Activated CD8-positive, alpha-beta T cell treated with anti-CD3 and anti-CD28 coated beads for 36 hours (primary cell): ENCODE measurements at regions of chr4 and their contacts with region 1.

Region 1: DNA sequence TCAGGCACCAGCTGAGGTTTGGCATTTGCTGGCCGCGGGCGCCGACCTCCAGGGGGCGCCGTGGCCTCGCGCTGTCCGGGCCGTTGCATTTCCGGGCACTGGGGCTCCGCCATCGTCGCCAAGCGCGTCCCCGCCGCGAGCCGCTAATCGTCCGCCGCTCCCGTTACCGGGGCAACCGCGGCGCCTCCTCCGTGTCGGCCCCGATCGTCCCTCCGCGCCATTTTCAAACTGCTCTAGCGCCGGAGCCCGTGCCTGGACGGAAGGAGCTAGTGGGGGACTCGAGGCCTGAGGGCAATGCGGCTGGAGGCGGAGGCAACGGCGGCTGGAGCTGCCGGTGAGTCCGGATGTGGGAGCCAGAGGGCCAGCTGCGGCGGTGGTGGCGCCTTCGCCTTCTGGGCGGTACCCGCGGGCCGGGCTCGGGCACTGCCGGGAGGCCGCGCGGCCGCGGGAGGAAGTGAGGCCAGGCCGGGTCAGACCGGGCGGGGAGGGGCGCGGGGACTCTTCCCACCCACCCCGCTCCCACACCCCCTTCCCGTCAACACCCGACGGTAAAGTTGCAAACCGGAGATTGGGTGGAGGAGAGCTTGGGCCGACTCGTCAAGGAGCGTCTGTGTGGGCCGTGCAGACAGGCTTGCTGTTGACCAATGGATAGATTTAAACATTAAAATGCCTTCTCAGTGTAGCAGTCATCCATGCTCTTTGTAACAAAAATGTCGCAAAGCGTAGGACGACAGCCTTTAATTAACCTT is at the start of gene CEP135:
- DNase-seq: peak; percentile 93
- ATAC-seq: peak; percentile 83
- H3K4me3 Mint-ChIP-seq: peak within 1 kb of the TSS; percentile 83
- H3K27ac Mint-ChIP-seq: peak within 1 kb of the TSS; percentile 94
- H3K4me1 Mint-ChIP-seq: peaks cover 23% of the 10 kb centered on the region
- H3K27me3 Mint-ChIP-seq: no peaks in the 10 kb centered on the region
- CTCF ChIP-seq: no peak
- total RNA-seq, gene CEP135: 12.5 to 12.9 TPM

Region 2: DNA sequence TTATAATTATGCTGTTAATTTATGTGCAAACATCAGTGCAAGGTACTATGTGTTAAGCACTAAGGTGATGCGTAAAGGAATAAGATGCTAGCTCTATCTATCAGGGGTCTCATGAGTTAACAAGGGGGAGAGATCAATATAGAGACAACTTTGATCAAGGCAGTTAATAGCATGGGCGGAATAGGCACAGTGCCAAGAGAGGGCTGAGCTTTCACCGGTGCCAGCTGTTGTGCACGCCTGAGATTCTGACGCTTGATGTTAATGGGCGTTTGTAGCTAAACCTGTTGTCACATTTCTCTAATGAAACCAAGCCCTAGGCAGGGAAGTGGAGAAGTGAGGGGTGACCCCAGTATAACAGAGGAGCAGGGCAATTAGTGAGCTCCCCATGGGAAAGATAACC is 226.8 kb before region 1 on chr4:
- CTCF ChIA-PET with region 1: no interaction called
- POLR2A ChIA-PET with region 1: no interaction called
- intact Hi-C with region 1: no loop called
- DNase-seq: no peak
- ATAC-seq: no peak
- H3K4me3 Mint-ChIP-seq: no peak overlapping the region
- H3K27ac Mint-ChIP-seq: no peak overlapping the region
- H3K4me1 Mint-ChIP-seq: no peaks in the 10 kb centered on the region
- H3K27me3 Mint-ChIP-seq: peaks cover 2% of the 10 kb centered on the region
- CTCF ChIP-seq: no peak

Region 3: GRCh38 chr4:55834086-55834800 is 114.7 kb before region 1 on chr4:
- CTCF ChIA-PET with region 1: no interaction called
- POLR2A ChIA-PET with region 1: no interaction called
- intact Hi-C with region 1: no loop called
- DNase-seq: no peak
- ATAC-seq: no peak
- H3K4me3 Mint-ChIP-seq: no peak overlapping the region
- H3K27ac Mint-ChIP-seq: no peak overlapping the region
- H3K4me1 Mint-ChIP-seq: no peaks in the 10 kb centered on the region
- H3K27me3 Mint-ChIP-seq: peaks cover 24% of the 10 kb centered on the region
- CTCF ChIP-seq: no peak

Region 4: DNA sequence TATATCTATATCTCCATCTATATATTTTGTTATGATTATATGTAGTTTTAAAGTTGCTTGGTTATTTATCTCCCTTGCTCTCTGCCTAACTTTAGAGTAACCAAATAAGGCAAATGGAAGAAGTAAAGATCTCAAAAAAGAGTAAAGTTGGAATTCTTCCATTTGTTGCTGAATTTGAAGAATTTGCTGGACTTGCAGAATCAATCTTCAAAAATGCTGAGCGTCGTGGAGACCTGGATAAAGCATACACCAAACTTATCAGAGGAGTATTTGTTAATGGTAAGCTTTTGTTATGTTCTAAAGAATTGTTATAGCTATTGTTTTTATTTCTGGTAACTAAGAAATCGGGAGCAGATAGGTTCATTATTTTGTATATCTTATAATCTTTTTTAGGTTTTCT is 52.3 kb before region 1 on chr4:
- CTCF ChIA-PET with region 1: interaction called, 11 read pairs
- POLR2A ChIA-PET with region 1: no interaction called
- intact Hi-C with region 1: no loop called
- DNase-seq: no peak
- ATAC-seq: no peak
- H3K4me3 Mint-ChIP-seq: no peak overlapping the region
- H3K27ac Mint-ChIP-seq: no peak overlapping the region
- H3K4me1 Mint-ChIP-seq: peaks cover 7% of the 10 kb centered on the region
- H3K27me3 Mint-ChIP-seq: no peaks in the 10 kb centered on the region
- CTCF ChIP-seq: no peak

Region 5: DNA sequence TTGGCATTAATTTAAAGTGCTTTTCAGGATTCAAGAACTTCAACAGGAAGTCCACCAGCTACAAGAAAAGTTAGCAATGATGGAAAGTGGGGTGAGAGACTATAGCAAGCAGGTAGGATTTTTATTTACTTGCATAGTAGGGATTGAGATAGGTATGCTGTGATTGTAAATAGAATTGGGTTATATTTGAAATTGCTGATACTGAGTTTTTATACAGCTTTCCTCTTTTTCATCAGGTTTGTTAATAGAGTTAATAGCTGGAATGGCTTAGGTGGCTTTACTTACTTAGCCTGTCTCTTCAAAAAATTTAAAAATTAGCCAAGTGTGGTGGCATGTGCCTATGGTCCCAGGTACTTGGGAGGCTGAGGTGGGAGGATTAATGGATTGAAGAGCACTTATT is 10.8 kb after region 1 on chr4:
- CTCF ChIA-PET with region 1: interaction called, 28 read pairs
- POLR2A ChIA-PET with region 1: interaction called, 5 read pairs
- intact Hi-C with region 1: no loop called
- DNase-seq: no peak
- ATAC-seq: no peak
- H3K4me3 Mint-ChIP-seq: no peak overlapping the region
- H3K27ac Mint-ChIP-seq: no peak overlapping the region
- H3K4me1 Mint-ChIP-seq: no peaks in the 10 kb centered on the region
- H3K27me3 Mint-ChIP-seq: no peaks in the 10 kb centered on the region
- CTCF ChIP-seq: no peak

Region 6: GRCh38 chr4:55973650-55974049 is 24.8 kb after region 1 on chr4:
- CTCF ChIA-PET with region 1: interaction called, 11 read pairs
- POLR2A ChIA-PET with region 1: interaction called, 3 read pairs
- intact Hi-C with region 1: no loop called
- DNase-seq: no peak
- ATAC-seq: no peak
- H3K4me3 Mint-ChIP-seq: no peak overlapping the region
- H3K27ac Mint-ChIP-seq: no peak overlapping the region
- H3K4me1 Mint-ChIP-seq: no peaks in the 10 kb centered on the region
- H3K27me3 Mint-ChIP-seq: no peaks in the 10 kb centered on the region
- CTCF ChIP-seq: no peak

Region 7: GRCh38 chr4:56026596-56026995 is 77.7 kb after region 1 on chr4:
- CTCF ChIA-PET with region 1: no interaction called
- POLR2A ChIA-PET with region 1: no interaction called
- intact Hi-C with region 1: no loop called
- DNase-seq: no peak
- ATAC-seq: no peak
- H3K4me3 Mint-ChIP-seq: no peak overlapping the region
- H3K27ac Mint-ChIP-seq: no peak overlapping the region
- H3K4me1 Mint-ChIP-seq: no peaks in the 10 kb centered on the region
- H3K27me3 Mint-ChIP-seq: no peaks in the 10 kb centered on the region
- CTCF ChIP-seq: no peak

Region 8: GRCh38 chr4:56048702-56049431 is 100.0 kb after region 1 on chr4:
- CTCF ChIA-PET with region 1: interaction called, 13 read pairs
- POLR2A ChIA-PET with region 1: no interaction called
- intact Hi-C with region 1: loop called (anchors 5 kb)
- DNase-seq: peak; percentile 59
- ATAC-seq: peak; percentile 97
- H3K4me3 Mint-ChIP-seq: peak overlapping the region; percentile 63
- H3K27ac Mint-ChIP-seq: no peak overlapping the region
- H3K4me1 Mint-ChIP-seq: peaks cover 6% of the 10 kb centered on the region
- H3K27me3 Mint-ChIP-seq: peaks cover 48% of the 10 kb centered on the region
- CTCF ChIP-seq: no peak

Region 9: GRCh38 chr4:56086073-56086521 is 137.2 kb after region 1 on chr4:
- CTCF ChIA-PET with region 1: no interaction called
- POLR2A ChIA-PET with region 1: no interaction called
- intact Hi-C with region 1: no loop called
- DNase-seq: no peak
- ATAC-seq: no peak
- H3K4me3 Mint-ChIP-seq: no peak overlapping the region
- H3K27ac Mint-ChIP-seq: no peak overlapping the region
- H3K4me1 Mint-ChIP-seq: no peaks in the 10 kb centered on the region
- H3K27me3 Mint-ChIP-seq: no peaks in the 10 kb centered on the region
- CTCF ChIP-seq: no peak

Region 10: DNA sequence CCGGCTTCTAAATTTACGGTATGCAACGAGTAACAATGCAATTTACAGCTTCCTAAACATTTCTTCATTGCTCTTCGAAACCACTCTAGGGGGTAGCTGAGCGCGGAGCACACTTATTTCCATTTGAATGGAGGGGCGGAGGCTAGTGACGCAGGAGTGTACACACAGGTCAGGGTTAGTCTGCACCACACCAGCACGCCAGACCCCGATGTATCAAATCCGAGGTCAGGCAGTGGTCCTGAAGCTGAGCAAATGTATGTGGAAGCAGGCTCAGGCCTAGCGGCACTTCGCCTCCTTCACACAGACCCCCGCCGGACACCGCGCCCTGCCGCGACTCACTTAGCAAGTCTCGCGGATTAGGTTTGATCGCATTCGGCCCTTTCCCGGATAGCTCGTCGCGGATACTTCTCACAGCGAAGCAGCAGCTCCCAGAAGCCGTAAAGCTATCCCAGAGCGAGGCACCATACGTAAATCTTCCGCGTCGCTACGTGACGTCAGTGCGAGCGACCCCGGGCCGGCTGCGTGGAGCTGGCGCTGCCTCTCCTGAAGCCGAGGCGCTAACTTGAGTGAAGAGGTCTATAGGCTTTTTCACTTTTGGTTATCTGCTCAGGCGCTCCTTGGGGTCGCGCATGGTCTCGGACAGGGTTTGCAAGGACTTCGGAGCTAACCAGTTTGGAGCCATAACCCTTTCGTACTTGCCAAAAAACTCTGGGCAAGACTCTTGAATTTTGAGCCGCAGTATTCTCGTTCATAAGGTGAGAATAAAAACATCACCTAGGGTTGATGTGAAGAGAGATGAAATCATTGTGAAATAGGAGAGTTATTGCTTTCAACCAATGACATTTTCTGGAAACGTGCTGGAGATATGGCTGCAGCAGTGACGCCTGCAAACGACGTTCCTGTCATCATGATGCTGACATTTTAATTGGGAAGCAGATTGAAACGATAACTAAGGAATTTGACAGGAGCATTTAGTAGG is 438.4 kb after region 1 on chr4 and contains the start of gene AASDH:
- CTCF ChIA-PET with region 1: interaction called, 10 read pairs
- POLR2A ChIA-PET with region 1: interaction called, 5 read pairs
- intact Hi-C with region 1: no loop called
- DNase-seq: peak; percentile 97
- ATAC-seq: peak; percentile 92
- H3K4me3 Mint-ChIP-seq: peak within 1 kb of the TSS; percentile 93
- H3K27ac Mint-ChIP-seq: peak within 1 kb of the TSS; percentile 99
- H3K4me1 Mint-ChIP-seq: peaks cover 39% of the 10 kb centered on the region
- H3K27me3 Mint-ChIP-seq: no peaks in the 10 kb centered on the region
- CTCF ChIP-seq: no peak
- total RNA-seq, gene AASDH: 14.5 to 14.7 TPM